Activated CD8-positive, alpha-beta memory T cell treated with anti-CD3 and anti-CD28 coated beads, Interleukin-2, amount 10 ng/mL, durations not matched to agents 7 days and 5 days (primary cell): ENCODE measurements at regions of chr6 and their contacts with region 1.

Region 1: GRCh38 chr6:35161776-35162607 is 20.9 kb upstream of the TCP11 start:
- DNase-seq: no peak
- ATAC-seq: no peak
- H3K4me3 Mint-ChIP-seq: no peak overlapping the region
- H3K27ac Mint-ChIP-seq: no peak overlapping the region
- H3K4me1 Mint-ChIP-seq: no peaks in the 10 kb centered on the region
- H3K27me3 Mint-ChIP-seq: peaks cover 25% of the 10 kb centered on the region

Region 2: DNA sequence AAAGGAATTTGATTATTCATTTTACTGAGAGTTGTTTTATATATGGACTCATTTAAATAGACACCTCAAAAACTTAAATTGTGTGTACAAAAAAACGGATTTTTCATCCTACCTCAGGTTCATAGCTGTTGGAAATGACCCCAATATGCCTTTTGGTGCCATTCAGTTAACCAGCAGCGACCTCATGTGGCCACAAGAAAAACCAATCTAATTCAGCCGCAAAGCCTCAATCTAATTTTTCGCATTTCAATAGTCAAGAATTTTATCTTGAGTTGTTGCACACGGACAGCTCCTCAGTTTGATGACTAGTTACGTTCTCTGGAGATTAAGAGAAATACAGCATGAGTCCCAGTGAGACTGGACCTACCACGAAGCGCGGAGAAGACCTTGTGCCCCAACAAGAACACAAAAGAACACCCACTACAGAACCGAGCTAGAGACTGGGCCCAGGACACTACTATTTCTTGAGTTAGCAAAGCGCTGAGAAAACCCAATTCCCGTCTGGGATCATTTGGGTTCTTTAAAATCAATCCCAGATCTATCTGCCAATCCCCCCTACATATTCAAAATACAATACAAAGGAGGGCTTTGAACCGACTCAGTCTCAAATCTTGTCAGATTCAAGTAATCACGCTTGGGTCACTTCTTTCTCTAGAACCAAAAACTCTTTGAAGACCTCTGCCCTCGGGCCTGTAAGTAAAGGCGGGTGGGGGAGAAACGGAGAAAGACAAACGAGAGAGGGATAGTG is 21.9 kb before region 1 on chr6:
- CTCF ChIA-PET with region 1: interaction called, 13 read pairs
- DNase-seq: peak; percentile 67
- ATAC-seq: peak; percentile 32
- H3K4me3 Mint-ChIP-seq: peak overlapping the region; percentile 14
- H3K27ac Mint-ChIP-seq: no peak overlapping the region
- H3K4me1 Mint-ChIP-seq: peaks cover 20% of the 10 kb centered on the region
- H3K27me3 Mint-ChIP-seq: peaks cover 37% of the 10 kb centered on the region